Naive thymus-derived CD8-positive, alpha-beta T cell (primary cell): ENCODE measurements at regions of chr2 and their contacts with region 1.

Region 1: DNA sequence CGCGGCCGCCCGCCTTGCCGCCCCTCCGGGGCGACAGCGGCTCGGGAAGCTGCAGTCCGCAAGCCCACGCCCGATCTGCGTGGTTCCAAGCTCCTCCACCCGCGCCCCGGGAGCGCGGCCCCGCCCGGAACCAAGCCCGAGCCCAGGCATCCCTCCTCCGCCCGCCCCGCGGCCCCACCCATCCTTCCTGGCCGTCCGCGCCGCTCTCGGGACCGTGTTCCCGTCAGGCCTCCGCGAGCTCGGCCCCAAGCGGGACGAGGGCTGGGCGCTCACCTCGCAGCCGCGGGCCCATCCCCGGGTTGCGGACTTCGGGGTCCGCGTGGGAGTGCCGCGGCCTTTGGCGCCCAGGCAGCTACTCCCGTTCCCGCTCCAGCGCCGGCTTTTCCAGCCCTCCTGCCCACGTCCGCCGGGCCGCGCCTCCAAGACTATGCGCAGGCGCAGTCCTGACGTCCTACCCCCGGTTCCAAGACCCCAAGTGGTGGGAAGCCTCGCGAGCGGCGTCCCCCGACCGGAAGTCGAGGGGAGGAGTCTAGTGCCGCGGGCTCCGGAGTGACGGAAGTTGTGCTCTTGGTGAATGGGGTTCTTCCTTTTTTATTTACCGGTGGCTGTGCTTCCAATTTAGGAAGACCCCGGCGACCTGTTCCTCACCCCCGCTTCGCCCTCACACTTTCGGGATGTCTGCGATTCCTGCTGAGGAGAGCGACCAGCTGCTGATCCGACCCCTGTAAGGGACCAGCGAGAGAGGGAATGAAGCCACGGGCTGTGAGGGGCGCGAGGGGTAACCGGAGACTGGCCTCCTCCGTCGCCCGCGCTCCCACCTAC is at the starts of genes CPSF3 and ITGB1BP1:
- DNase-seq: peak; percentile 96 to 98 (median 98)
- ATAC-seq: peak; percentile 88 to 90
- H3K4me3 Mint-ChIP-seq: peak within 1 kb of the TSS in 5 of 10 donors; percentile 91 to 93 (median 93)
- H3K27ac Mint-ChIP-seq: peak within 1 kb of the TSS in 9 of 10 donors; percentile 90 to 99 (median 94)
- H3K4me1 Mint-ChIP-seq: peaks cover 24 to 38% (median 32%) of the 10 kb centered on the region in 4 donors
- H3K27me3 Mint-ChIP-seq: no peaks in the 10 kb centered on the region
- polyA plus RNA-seq, gene CPSF3: 21.3 to 32.3 (median 24.4) TPM
- polyA plus RNA-seq, gene ITGB1BP1: 122 to 136 (median 136) TPM

Region 2: GRCh38 chr2:9474361-9474967 is 51.2 kb after region 1 on chr2 and contains the start of gene IAH1:
- POLR2A ChIA-PET with region 1: interaction called, 18 read pairs
- DNase-seq: peak; percentile 62 to 87 (median 76)
- ATAC-seq: peak; percentile 81 to 84
- H3K4me3 Mint-ChIP-seq: peak within 1 kb of the TSS; percentile 76 to 89 (median 84)
- H3K27ac Mint-ChIP-seq: peak within 1 kb of the TSS; percentile 61 to 97 (median 92)
- H3K4me1 Mint-ChIP-seq: peaks cover 17 to 55% (median 43%) of the 10 kb centered on the region in 4 donors
- H3K27me3 Mint-ChIP-seq: no peaks in the 10 kb centered on the region
- polyA plus RNA-seq, gene IAH1: 61.8 to 81.5 (median 66.6) TPM

Region 3: GRCh38 chr2:9555297-9556141 is 132.2 kb after region 1 on chr2 and contains the start of gene ADAM17:
- POLR2A ChIA-PET with region 1: interaction called, 17 read pairs
- DNase-seq: peak; percentile 68 to 86 (median 80)
- ATAC-seq: peak; percentile 89 to 93
- H3K4me3 Mint-ChIP-seq: peak within 1 kb of the TSS; percentile 94 to 99 (median 96)
- H3K27ac Mint-ChIP-seq: peak within 1 kb of the TSS; percentile 93 to 98 (median 96)
- H3K4me1 Mint-ChIP-seq: peaks cover 26 to 63% (median 56%) of the 10 kb centered on the region in 4 donors
- H3K27me3 Mint-ChIP-seq: no peaks in the 10 kb centered on the region
- polyA plus RNA-seq, gene ADAM17: 6.9 to 7.8 (median 7.7) TPM